ENCODE measurements at regions of chr18 and their contacts with region 1.

Region 1: DNA sequence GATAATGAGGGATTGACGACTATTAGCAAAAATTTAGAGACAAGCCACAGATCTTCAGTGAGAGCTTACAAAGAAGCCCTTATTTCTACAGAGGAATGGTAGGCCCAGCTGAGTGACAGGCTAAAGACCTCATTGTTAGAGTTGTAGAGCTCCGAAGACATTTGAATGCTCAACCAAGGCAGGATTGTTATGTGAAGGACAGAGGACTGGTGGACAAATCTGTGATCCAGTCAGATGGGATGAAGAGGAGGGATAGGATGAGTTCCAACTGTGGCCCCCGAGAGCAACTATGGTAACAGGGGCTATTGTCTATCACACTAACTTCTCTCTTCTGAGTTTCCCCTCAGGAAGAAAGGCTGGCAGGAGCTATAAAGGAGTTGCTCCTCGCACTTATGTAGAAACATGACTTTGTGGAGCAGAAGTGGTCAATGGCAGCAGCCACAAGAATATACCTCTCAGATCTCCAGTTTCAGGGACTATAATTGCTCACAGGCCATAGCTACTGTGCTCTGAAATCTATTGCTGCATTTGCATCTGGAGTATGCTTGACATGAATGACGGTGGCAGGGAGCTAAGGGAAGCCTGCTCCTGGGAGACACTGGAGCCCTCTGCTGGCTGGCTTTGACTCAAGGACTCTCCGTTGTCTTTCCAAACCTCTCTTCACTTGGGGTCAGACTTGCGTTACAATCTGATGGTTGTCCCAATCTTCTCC is 50.3 kb upstream of the GREB1L start:
- DNase-seq: peak; percentile 57
- ATAC-seq: peak; percentile 92
- H3K4me3 ChIP-seq: no peak overlapping the region
- H3K27ac ChIP-seq: no peak overlapping the region
- H3K4me1 ChIP-seq: peaks cover 0 to 16% of the 10 kb centered on the region in 2 experiments; a peak in 2 of 4 replicates
- H3K27me3 ChIP-seq: no peaks in the 10 kb centered on the region
- CTCF ChIP-seq: peak; percentile 72 to 91 (median 77)
- POLR2A ChIP-seq: no peak
- RAD21 ChIP-seq: peak; percentile 71

Region 2: GRCh38 chr18:21179590-21180220 is 12.0 kb before region 1 on chr18:
- CTCF ChIA-PET with region 1: interaction called, 32 read pairs
- POLR2A ChIA-PET with region 1: no interaction called
- RAD21 ChIA-PET with region 1: no interaction called
- intact Hi-C with region 1: no loop called
- DNase-seq: peak; percentile 58
- ATAC-seq: peak; percentile 87
- H3K4me3 ChIP-seq: no peak overlapping the region
- H3K27ac ChIP-seq: no peak overlapping the region
- H3K4me1 ChIP-seq: peaks cover 7 to 12% of the 10 kb centered on the region in 2 experiments; a peak in 3 of 4 replicates
- H3K27me3 ChIP-seq: no peaks in the 10 kb centered on the region
- CTCF ChIP-seq: peak; percentile 50 to 83 (median 77); a peak in 5 of 6 replicates
- POLR2A ChIP-seq: no peak
- RAD21 ChIP-seq: peak; percentile 78

Region 3: DNA sequence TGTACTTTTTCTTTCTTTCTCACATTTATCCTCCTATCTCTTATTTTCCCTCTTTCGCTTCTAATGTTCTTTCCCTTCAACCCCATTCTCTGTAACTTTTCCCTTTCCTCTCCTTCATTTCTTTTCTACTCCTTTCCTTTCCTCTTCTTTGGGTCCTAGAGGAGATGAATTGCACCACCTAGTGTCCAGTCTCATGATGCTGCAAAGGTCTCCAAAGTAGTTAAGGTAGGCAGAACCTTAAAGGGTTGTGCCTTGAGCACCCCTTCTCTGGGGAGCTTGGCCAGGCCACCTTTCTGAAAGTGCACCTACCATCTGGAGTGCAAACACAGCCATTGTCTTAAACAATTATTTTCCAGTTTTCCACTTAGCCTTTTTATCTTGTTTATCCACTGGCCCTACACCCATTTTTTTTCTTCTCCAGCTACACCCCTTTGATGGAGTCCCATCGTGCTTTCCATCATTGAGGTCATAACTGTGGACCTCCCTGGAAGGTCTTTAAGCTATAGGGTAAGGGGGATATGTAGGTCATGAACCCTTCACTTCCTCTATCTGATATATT is 252.8 kb after region 1 on chr18:
- CTCF ChIA-PET with region 1: interaction called, 51 read pairs
- POLR2A ChIA-PET with region 1: no interaction called
- RAD21 ChIA-PET with region 1: interaction called, 4 to 5 read pairs
- intact Hi-C with region 1: loop called (anchors 1 kb)
- DNase-seq: peak; percentile 64
- ATAC-seq: peak; percentile 92
- H3K4me3 ChIP-seq: no peak overlapping the region
- H3K27ac ChIP-seq: no peak overlapping the region
- H3K4me1 ChIP-seq: peaks cover 0 to under 1% of the 10 kb centered on the region in 2 experiments; a peak in 1 of 4 replicates
- H3K27me3 ChIP-seq: no peaks in the 10 kb centered on the region
- CTCF ChIP-seq: peak; percentile 74 to 87 (median 87)
- POLR2A ChIP-seq: no peak
- RAD21 ChIP-seq: peak; percentile 86

Region 4: DNA sequence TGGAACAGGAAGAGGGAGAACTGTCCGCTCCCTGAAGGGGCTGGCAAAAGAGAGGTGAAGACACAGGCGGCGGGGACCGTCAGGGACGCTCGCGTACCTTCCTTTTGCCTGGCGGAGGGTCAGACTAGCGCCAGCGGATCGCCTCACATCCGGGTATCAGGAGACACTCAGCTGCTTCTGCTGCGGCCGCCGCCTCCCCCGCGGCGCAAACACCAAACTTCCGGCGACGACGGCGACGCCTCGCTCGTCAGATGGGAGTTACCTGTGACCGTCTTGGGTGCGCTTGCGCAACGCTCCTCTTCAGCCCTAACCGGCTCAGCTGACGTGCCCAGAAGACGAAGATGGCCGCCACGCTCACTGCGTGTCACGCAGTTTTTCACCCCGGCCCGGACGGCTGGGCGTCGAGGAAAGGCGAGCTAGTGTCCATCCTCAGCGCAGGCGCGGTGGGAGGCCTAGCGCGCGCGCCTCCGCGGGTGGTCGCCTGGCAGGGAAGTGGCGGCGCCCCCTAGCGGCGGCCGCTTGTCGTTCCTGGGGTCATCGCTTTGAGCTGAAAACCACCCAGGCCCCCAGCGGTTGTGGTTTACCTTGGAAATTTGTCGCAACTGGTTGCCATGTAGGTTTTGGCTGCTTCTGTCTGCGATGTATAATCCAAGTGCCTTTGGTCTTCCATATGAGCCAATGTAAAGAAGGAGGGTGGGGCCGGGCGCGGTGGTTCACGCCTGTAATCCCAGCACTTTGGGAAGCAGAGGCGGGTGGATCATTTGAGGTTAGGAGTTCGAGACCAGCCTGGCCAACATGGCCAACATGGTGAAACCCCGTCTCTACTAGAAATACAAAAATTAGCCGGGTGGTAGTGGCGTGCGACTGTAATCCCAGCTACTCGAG is 409.0 kb after region 1 on chr18 and contains the start of gene ESCO1:
- CTCF ChIA-PET with region 1: interaction called, 26 read pairs
- POLR2A ChIA-PET with region 1: interaction called, 4 read pairs
- RAD21 ChIA-PET with region 1: no interaction called
- intact Hi-C with region 1: loop called (anchors 5 kb)
- DNase-seq: peak; percentile 99
- ATAC-seq: peak; percentile 91
- H3K4me3 ChIP-seq: peak within 1 kb of the TSS; percentile 84 to 99
- H3K27ac ChIP-seq: peak within 1 kb of the TSS; percentile 100
- H3K4me1 ChIP-seq: peaks cover 7 to 13% of the 10 kb centered on the region in 2 experiments
- H3K27me3 ChIP-seq: no peaks in the 10 kb centered on the region
- CTCF ChIP-seq: peak in 2 of 3 experiments; percentile 67 to 81; a peak in 4 of 6 replicates
- POLR2A ChIP-seq: no peak
- RAD21 ChIP-seq: no peak
- total RNA-seq, gene ESCO1: 19.6 TPM

Region 5: GRCh38 chr18:21851327-21851972 is 659.7 kb after region 1 on chr18:
- CTCF ChIA-PET with region 1: no interaction called
- POLR2A ChIA-PET with region 1: no interaction called
- RAD21 ChIA-PET with region 1: no interaction called
- intact Hi-C with region 1: loop called (anchors 5 kb)
- DNase-seq: no peak
- ATAC-seq: no peak; the same call in 1 of the 2 replicates
- H3K4me3 ChIP-seq: no peak overlapping the region
- H3K27ac ChIP-seq: no peak overlapping the region
- H3K4me1 ChIP-seq: no peaks in the 10 kb centered on the region
- H3K27me3 ChIP-seq: no peaks in the 10 kb centered on the region
- CTCF ChIP-seq: peak; percentile 19 to 28 (median 24); a peak in 2 of 6 replicates
- POLR2A ChIP-seq: no peak
- RAD21 ChIP-seq: peak; percentile 47